ENCODE measurements at regions of chr4 and their contacts with region 1.

Region 1: DNA sequence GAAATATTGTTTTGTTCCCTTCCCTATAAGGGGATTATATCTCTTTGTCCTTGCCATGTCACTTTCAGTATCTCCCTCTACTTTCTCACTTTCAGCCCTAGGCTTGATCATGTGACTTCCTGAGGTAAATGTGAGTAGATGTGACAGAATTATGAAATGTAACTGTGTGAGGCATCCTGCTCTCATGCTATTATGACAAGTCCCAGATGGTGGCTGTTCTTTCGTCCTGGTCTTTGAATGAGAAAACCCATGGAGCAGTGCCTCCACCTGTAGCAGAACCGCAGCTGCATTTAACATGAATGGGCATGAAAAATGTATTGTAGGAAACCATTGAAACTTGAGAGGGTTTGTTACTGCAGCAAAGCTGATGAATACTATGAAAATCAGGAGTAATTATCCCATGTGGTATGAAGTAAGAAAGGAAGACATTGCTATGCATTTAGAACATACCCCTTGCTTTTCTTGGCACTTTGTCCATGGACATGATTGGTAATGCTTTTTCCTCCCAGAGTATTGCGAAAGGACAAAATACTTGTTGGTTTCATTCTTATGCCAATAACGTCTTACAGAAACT is 202.2 kb upstream of the GPRIN3 start:
- DNase-seq: peak; percentile 16
- H3K4me3 Mint-ChIP-seq: no peak overlapping the region
- H3K27ac Mint-ChIP-seq: no peak overlapping the region
- H3K4me1 Mint-ChIP-seq: peaks cover 13% of the 10 kb centered on the region
- H3K27me3 Mint-ChIP-seq: peaks cover 36% of the 10 kb centered on the region

Region 2: GRCh38 chr4:89469930-89470375 is 39.8 kb before region 1 on chr4:
- intact Hi-C with region 1: loop called (anchors 2 kb)
- DNase-seq: peak; percentile 19
- H3K4me3 Mint-ChIP-seq: no peak overlapping the region
- H3K27ac Mint-ChIP-seq: peak overlapping the region; percentile 80
- H3K4me1 Mint-ChIP-seq: peaks cover 21% of the 10 kb centered on the region
- H3K27me3 Mint-ChIP-seq: no peaks in the 10 kb centered on the region

Region 3: GRCh38 chr4:89539797-89540711 is 30.3 kb after region 1 on chr4:
- intact Hi-C with region 1: loop called (anchors 1 kb)
- DNase-seq: no peak
- H3K4me3 Mint-ChIP-seq: no peak overlapping the region
- H3K27ac Mint-ChIP-seq: peak overlapping the region; percentile 71
- H3K4me1 Mint-ChIP-seq: peaks cover 18% of the 10 kb centered on the region
- H3K27me3 Mint-ChIP-seq: peaks cover 6% of the 10 kb centered on the region